ENCODE measurements at regions of chr6 and their contacts with region 1.

Region 1: DNA sequence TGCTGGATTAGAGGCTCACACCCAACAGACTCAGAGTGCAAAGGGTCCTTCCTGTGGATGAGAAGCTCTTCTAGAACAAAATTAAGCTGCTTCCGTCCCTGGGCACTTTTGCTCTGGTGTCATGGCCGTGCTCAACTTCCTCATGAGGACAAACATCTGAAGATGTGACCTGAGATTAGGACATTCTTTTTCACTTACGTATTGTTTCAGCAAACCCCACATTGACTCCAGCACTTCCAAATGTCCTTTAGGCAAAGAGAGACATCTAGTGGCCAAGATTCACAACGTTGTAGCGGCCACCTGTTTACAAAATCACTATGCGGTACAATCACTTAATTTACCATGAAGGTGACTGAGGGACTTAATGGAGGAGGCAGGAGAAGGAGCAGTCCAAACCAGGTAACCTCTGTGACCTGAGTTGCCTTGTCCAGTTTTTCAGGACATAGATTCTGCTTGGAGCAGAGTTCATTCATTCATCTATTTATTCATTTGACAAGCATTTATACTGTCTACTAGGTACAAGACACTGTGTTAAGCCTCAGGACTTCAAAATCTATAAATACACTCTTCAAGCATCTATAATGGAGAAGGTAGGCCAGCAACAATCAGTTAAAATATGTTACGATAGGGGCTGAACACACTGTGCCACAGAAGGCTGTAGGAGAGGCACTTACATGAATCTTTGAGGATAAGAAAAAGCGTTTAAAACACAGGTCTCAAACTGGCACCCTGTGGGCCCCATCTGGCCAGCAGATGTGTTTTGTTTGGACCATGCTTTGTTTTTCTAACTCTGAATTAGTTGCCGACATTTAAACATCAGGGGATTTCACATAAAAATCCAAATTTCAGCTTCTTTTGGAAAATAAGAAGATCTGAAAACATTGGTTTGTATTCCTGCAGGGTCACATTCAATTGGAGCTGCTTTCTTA is 5.6 kb upstream of the ADGRF1 start:
- DNase-seq: peak; percentile 32
- CTCF ChIP-seq: peak; percentile 58

Region 2: DNA sequence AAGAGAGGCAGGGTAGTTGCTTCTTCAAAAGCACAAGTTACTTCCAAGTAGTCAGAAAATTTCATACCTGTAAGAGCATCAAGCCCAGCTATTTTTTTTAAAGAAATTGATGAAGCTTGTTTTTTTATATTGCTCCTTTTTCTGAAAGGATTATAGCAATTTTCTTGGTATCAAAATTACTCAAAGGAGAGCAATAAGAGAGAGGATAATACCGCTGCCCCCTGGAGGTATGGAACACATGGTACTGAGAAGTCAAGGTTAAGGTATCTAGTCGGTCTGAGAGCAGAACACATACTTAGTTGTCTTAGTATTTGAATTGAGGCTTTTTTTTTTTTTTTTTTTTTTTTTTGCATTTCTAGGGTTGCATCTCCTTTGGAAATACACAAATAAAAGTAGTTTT is 185.4 kb before region 1 on chr6:
- in situ Hi-C with region 1: loop called (anchors 25 kb)
- DNase-seq: no peak
- CTCF ChIP-seq: no peak